ENCODE measurements at regions of chr3 and their contacts with region 1.

Region 1: GRCh38 chr3:116770815-116771450 is 61.4 kb downstream of the TUSC7 start:
- DNase-seq: peak; percentile 43 to 94 (median 80)

Region 2: DNA sequence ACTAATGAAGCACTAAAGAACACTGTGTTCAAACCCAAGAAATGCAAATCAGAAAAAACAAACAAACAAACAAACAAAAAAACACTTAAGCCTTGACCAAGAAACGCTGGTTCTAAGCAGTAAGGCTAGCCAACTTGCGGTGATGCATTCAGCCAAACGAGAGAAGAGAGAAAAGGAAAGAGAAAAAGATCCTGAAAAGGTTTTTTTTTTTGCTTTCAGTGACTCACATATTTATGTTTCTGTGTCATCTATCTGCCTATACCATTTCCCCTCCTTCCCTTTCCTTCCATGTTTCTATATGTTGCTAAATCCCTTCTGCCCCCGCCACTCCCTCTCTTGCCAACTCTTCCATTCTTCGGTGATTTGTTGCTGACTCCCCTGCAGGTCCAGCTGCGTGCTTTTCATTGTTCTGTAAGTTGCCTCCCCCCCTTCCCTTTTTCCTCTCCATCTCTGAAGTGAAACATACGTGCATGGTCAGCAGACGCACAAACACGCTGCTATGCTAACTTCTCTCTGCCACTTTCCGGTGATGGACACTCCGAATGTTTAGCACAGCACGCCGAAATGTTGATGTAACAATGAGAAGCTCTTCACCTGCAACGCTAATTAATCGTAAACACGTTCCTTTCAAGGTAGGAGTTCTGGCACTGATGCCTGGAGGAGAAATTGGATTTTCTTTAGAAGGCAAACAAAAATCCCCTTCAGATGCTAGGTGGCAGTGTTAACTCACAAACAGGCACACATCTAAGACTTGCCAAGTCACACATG is 93.1 kb after region 1 on chr3:
- intact Hi-C with region 1: loop called (anchors 5 kb)
- DNase-seq: peak in 6 of 10 donors; percentile 7 to 71 (median 38)

Region 3: DNA sequence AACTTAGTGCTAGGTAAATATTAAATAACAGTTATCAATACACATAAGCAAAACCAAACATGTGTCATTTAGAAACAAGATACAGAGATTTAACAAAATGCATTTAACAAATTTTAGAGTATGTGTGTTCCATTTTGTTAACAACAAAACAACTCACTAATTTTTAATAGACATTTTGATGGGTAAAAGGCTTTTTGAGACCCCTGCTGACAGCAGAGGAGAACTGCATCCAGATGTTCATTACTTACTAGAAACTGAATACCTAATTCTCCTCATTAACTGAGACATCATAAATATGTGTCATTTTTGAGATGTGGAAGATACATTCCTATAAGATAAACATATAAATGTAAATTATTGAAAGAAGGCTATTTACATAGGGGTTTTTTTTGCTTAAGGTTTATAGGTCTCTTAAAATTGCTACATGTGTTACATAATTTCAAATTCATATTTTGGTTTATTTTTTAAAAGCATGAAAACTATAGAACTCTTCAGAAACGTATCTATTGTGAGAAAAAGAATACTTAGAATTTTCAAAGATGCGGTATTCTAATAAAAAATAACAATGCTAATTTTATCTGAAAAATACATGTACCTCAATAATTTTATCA is 948.5 kb after region 1 on chr3:
- intact Hi-C with region 1: loop called (anchors 10 kb)
- DNase-seq: peak in 1 of 10 donors; percentile 7

Region 4: GRCh38 chr3:118628704-118629341 is 1857.9 kb after region 1 on chr3:
- intact Hi-C with region 1: loop called (anchors 5 kb)
- DNase-seq: peak; percentile 40 to 94 (median 72)